ENCODE measurements at regions of chr13 and their contacts with region 1.

Region 1: GRCh38 chr13:40801255-40802217 is 12.1 kb downstream of the SLC25A15 start:
- DNase-seq: no peak
- ATAC-seq: no peak
- H3K4me3 Mint-ChIP-seq: no peak overlapping the region
- H3K27ac Mint-ChIP-seq: no peak overlapping the region
- H3K4me1 Mint-ChIP-seq: peaks cover 4% of the 10 kb centered on the region
- H3K27me3 Mint-ChIP-seq: no peaks in the 10 kb centered on the region

Region 2: DNA sequence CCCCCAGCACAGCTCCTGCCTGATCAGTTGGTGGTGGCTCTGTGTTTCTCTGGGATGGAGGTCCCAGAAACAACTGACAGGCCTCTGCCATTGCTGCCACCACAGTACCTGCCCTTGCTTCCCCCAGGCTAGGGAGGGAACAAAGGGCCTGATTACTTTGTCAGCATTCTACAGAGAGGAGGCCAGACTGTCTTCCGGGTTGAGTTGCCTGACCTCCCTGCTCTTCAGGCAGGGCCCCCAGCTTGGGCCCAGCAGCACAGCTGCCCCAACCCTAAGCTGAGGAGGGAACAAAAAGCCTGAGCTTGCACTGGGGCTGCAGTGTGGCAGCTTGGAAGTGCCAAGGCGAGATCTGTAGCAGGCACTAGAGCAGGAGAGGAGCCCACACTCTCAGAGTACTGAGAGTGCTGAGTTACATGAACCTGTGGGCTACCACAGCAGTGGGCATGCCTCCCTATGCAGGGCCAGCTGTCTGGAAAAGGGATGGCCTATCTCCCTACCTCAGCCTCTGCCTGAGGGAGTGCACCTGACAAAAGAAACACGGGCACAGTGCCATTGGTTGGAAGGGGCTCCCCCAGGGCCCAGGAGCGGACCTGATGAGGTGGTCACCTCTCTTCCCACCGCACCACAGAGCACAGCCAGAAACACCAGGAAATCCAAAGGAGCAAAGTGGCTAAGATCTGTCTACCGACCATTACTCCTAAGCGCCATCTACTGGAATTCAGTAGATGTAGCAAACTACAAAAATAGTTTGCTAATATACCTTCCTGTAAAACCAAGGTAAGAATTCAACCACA is 12.3 kb after region 1 on chr13:
- CTCF ChIA-PET with region 1: interaction called, 15 read pairs
- DNase-seq: no peak
- ATAC-seq: peak; percentile 69
- H3K4me3 Mint-ChIP-seq: no peak overlapping the region
- H3K27ac Mint-ChIP-seq: no peak overlapping the region
- H3K4me1 Mint-ChIP-seq: peaks cover 1% of the 10 kb centered on the region
- H3K27me3 Mint-ChIP-seq: no peaks in the 10 kb centered on the region